ENCODE measurements at regions of chr17 and their contacts with region 1.

Region 1: DNA sequence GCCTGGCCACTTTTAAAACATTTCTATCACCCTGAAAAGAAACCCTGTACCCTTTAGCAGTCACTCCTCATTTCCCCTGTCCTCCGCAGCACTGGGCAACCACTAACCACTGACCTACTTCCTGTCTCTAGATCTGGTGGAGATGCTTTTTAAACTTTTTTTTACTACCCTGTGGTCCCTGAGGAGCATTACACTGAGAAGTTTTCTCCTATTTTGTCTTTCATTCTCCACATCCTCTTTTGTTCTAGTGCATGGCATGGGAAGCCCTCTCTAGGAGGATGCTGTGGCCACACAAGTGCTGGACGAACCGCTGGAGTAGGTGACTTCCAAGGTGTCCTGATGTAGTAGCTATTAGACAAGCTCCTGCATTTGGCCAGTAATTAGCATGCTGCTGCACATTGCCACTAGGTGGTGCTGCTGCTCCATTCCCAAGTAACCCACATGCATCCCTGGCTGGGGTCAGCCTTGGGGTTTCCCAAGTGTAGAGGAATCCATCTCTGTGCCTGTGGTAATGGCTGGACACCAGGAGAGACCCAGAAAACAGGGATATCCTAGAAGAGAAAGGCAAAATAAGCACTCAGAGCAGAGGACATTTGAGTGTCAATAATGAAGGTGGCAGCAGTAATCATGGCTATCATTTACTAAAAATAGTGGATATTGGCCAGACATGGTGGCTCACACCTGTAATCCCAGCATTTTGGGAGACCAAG is 143.8 kb upstream of the CRHR1 start:
- DNase-seq: peak; percentile 50 to 62
- ATAC-seq: peak; percentile 46 to 81 (median 64)
- H3K4me3 ChIP-seq: no peak overlapping the region
- H3K27ac ChIP-seq: no peak overlapping the region
- H3K4me1 ChIP-seq: no peaks in the 10 kb centered on the region
- H3K27me3 ChIP-seq: peaks cover 0 to 1% (median 0%) of the 10 kb centered on the region in 7 donors
- CTCF ChIP-seq: peak; percentile 91 to 97 (median 94)

Region 2: DNA sequence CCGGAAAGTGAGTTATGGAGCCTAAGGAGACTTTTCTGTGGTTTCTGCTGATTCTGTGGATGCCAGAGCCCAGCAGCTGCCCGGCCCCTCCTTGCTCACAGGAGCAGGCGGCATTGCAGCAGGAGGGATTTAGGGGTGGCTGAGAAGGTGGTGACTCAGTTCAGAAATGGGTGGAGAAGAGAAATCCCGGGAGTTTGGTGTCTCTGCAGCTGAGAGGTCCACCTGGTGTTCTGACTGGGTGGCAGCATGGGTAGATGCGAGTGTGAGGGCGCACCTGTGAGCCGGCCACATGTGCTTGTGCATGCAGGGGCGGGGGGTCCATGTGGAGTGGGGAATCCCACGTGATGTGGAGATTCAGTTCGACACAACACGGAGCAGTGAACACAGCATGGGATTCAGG is 188.3 kb after region 1 on chr17:
- intact Hi-C with region 1: loop called in 9 of 10 experiments (anchors 1 to 5 kb)
- DNase-seq: no peak
- ATAC-seq: no peak
- H3K4me3 ChIP-seq: no peak overlapping the region
- H3K27ac ChIP-seq: no peak overlapping the region
- H3K4me1 ChIP-seq: no peaks in the 10 kb centered on the region
- H3K27me3 ChIP-seq: peaks cover 0 to 76% (median 36%) of the 10 kb centered on the region in 7 donors
- CTCF ChIP-seq: no peak

Region 3: GRCh38 chr17:45834471-45835396 is 194.4 kb after region 1 on chr17:
- intact Hi-C with region 1: loop called (anchors 1 to 5 kb)
- DNase-seq: no peak
- ATAC-seq: peak in 1 of 8 donors; percentile 5
- H3K4me3 ChIP-seq: no peak overlapping the region
- H3K27ac ChIP-seq: no peak overlapping the region
- H3K4me1 ChIP-seq: no peaks in the 10 kb centered on the region
- H3K27me3 ChIP-seq: peaks cover 0 to 73% (median 34%) of the 10 kb centered on the region in 7 donors
- CTCF ChIP-seq: no peak

Region 4: GRCh38 chr17:45852535-45853297 is 212.4 kb after region 1 on chr17:
- intact Hi-C with region 1: loop called in 3 of 10 experiments (anchors 5 kb)
- DNase-seq: peak in 1 of 2 donors; percentile 38
- ATAC-seq: no peak
- H3K4me3 ChIP-seq: no peak overlapping the region
- H3K27ac ChIP-seq: no peak overlapping the region
- H3K4me1 ChIP-seq: peaks cover 0 to 7% (median 0%) of the 10 kb centered on the region in 9 donors
- H3K27me3 ChIP-seq: peaks cover 0 to 37% (median 26%) of the 10 kb centered on the region in 7 donors
- CTCF ChIP-seq: peak; percentile 70 to 92 (median 87)

Measured in heart right ventricle (tissue), 16 donors.